GM10248 (cell line): ENCODE measurements at regions of chr1 and their contacts with region 1.

Region 1: GRCh38 chr1:20031161-20031560 is 38.8 kb upstream of the PLA2G5 start:
- DNase-seq: no peak
- CTCF ChIP-seq: no peak

Region 2: DNA sequence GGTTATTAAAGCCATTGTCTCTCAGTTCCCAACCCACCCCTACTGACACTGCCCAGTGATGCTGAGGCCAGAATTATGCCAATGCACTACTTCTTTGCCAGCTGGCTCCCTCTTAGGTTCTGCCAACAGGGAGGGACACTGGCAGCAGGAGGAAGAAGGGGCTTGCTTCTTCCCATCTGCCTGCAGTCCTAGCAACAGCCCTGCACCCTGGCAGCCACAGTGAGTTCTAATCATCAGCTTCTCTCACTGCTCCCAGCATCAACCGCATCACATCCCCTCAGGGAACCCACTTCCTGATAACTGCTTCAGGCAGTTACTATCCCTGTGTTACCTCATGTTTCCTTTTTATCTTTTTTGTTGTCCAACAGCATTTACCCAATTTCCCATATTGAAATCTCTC is 907.3 kb before region 1 on chr1:
- CTCF ChIA-PET with region 1: no interaction called
- POLR2A ChIA-PET with region 1: interaction called, 12 read pairs
- DNase-seq: no peak
- CTCF ChIP-seq: no peak

Region 3: GRCh38 chr1:19514391-19514831 is 516.8 kb before region 1 on chr1:
- CTCF ChIA-PET with region 1: no interaction called
- POLR2A ChIA-PET with region 1: no interaction called
- DNase-seq: no peak
- CTCF ChIP-seq: no peak

Region 4: DNA sequence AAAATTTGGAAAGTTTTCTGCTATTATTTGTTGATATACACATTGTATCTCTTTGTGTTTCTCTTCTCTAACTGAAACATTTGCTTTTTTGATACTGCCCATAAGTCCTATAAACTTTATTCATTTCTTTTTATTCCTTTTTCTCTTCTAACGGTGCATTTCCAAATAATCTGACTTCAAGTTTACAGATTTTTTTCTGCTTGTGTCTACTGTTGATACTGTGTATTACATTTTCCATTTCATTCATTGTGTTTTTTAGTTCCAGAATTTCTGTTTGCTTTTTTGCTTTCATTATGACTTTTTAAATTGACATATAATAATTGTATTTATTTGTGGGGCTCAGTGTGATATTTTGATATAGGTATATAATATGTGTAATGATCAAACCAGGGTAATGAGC is 13.4 kb before region 1 on chr1:
- CTCF ChIA-PET with region 1: no interaction called
- POLR2A ChIA-PET with region 1: no interaction called
- DNase-seq: no peak
- CTCF ChIP-seq: no peak

Region 5: GRCh38 chr1:20271498-20272400 is 240.6 kb after region 1 on chr1:
- CTCF ChIA-PET with region 1: no interaction called
- POLR2A ChIA-PET with region 1: no interaction called
- DNase-seq: no peak
- CTCF ChIP-seq: peak; percentile 21